PC-9 (cell line): ENCODE measurements at regions of chr6 and their contacts with region 1.

Region 1: DNA sequence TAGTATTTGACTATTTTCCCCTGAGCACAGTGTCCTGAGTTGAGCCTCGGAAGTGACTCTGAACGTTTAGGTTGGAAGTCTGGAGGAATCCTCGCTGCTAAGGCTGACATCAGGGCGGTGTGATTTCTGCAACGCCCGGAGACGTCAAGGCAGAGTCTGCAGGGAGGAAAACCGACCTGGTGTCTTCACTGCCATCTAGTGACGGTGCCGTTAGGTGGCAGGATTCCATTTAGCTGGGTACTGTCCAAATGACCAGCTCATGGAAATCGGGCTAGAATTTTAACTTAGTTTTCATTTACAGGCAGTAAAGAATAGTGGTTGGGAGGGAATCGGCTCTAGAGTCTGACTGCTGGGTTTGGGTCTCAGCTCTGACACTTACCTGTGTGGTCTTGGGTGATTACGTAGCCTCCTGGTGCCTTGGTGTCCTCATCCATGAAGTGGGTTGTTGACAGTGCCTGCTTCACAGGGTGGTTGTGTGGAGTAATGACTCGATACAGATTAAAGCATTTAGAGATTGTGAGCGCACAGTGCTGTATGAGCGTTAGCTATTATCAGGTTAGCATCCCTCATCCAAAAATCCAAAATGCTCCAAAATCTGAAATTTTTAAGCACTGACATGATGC is 35.0 kb downstream of the FOXF2 start:
- DNase-seq: peak in 1 of 2 experiments; percentile 45
- H3K4me3 ChIP-seq: no peak overlapping the region
- H3K27ac ChIP-seq: no peak overlapping the region
- H3K4me1 ChIP-seq: no peaks in the 10 kb centered on the region
- H3K27me3 ChIP-seq: 0 out of 2 replicates have a peak, but pooled peaks cover 8% of the 10 kb centered on the region
- CTCF ChIP-seq: peak; percentile 68

Region 2: DNA sequence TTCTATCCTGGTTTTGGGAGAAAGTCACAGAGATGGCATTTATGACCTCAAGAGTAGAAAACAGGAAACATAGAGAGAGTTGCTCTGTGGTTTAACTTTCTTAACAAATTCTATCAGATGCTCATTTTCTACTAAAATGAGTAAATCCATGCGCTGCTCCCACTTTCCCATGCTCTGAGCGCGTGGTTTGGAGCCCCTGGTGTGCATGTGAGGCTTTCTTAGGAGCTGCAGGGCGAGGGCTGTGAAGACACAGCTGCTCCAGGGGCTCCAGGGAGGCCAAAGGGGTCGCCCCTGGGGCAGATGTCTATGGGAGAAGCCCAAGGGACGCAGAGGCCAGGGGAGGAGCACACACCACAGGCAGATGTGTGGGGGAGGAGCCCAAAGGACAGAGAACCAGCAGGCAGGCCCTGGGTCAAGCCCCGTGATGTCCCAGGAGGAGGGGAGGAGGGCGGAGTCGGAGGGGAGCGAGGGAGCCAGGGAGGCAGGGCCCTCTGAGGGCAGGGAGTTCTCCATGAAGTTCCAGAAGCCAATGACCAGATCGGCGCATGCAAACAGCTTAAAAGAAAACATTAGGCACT is 909.9 kb before region 1 on chr6:
- CTCF ChIA-PET with region 1: no interaction called
- POLR2A ChIA-PET with region 1: no interaction called
- intact Hi-C with region 1: no loop called
- DNase-seq: no peak
- H3K4me3 ChIP-seq: no peak overlapping the region
- H3K27ac ChIP-seq: no peak overlapping the region
- H3K4me1 ChIP-seq: no peaks in the 10 kb centered on the region
- H3K27me3 ChIP-seq: no peaks in the 10 kb centered on the region
- CTCF ChIP-seq: no peak

Region 3: GRCh38 chr6:692855-693722 is 731.3 kb before region 1 on chr6 and contains the start of gene EXOC2:
- CTCF ChIA-PET with region 1: no interaction called
- POLR2A ChIA-PET with region 1: interaction called, 40 read pairs
- intact Hi-C with region 1: no loop called
- DNase-seq: peak; percentile 56 to 81
- H3K4me3 ChIP-seq: peak within 1 kb of the TSS; percentile 80
- H3K27ac ChIP-seq: peak within 1 kb of the TSS; percentile 49; the same call in 1 of the 2 replicates
- H3K4me1 ChIP-seq: peaks cover 6% of the 10 kb centered on the region; the same call in 1 of the 2 replicates
- H3K27me3 ChIP-seq: no peaks in the 10 kb centered on the region
- CTCF ChIP-seq: no peak
- total RNA-seq, gene EXOC2: 21.3 and 28.2 TPM in 2 replicates

Region 4: DNA sequence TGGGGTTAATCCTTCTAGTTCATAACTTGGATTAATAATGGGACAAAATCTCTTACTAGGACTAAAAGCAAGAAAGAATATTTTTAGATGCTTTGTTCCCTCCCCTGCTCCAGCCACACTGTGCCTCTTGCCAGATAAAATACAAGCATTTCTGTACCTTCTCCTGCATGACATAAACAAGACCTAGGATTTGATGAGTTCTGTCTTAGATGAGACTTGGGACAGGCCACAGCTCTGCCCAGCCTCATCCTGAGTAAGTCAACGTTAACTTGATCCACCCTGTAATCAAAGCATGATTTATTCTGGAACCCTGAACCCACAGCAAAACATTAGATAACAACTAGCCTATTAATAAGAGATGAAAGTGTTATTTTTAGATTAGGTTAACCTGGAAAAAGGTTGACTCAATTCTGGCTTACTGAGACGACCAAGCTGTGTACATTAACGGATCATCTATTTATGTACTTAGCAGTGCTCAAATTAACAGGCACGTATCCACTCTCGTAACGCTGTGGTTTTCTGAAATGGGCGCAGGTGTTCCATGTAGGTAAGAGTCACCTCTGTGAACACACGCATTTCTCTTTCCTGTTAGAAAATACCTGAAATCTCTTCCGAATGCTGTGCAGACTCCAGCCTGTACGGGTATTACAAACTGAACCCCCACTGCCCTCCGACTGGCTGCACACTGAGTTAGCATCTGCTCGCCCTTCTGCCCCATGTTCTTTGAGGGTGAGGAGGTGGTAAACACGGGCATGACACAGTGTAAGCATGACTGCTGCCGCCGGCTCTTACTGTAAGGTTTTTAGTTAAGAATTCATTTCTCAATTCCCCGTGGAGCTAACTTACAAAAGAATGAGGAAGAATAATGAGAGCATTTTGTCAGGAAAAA is 244.6 kb before region 1 on chr6:
- CTCF ChIA-PET with region 1: no interaction called
- POLR2A ChIA-PET with region 1: no interaction called
- intact Hi-C with region 1: no loop called
- DNase-seq: no peak
- H3K4me3 ChIP-seq: no peak overlapping the region
- H3K27ac ChIP-seq: no peak overlapping the region
- H3K4me1 ChIP-seq: 0 out of 2 replicates have a peak, but pooled peaks cover 4% of the 10 kb centered on the region
- H3K27me3 ChIP-seq: no peaks in the 10 kb centered on the region
- CTCF ChIP-seq: no peak

Region 5: DNA sequence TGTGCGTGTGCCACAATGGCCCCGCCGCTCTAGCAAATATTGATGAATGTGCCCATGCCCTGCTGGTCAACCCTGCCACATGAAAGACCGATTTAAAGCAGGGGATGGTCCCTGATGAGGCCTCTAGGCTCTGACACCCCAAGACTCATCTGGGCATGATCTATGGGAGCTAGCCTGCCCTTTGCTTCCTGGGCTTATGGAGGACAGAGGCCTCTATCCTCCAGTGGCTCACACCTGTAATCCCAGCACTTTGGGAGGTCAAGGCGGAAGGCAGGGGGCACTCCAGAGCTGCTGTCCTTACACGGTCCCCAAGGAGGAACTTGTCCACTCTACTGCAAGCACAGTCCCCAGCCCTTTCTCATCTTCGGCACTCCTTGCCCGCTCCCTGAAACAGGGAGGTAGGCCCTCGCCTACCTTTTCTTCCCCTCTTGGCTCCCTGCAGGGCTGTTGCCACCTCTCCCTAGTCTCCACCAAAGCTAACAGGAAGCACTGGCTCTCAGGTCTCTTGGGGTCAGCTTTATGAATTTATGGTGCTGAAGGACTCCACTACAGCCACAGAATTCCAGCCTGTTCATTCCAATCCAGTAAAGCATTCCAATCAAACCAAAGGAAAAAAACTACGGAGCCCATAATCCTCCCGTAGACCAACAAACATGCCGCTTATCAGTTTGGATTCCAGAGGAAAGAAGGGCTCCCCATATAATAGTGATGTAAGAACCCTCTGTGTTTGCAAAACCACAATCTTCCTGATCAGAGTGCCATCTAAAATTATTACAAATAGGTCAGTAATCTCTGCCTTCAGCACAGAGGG is 161.2 kb before region 1 on chr6:
- CTCF ChIA-PET with region 1: no interaction called
- POLR2A ChIA-PET with region 1: no interaction called
- intact Hi-C with region 1: no loop called
- DNase-seq: peak in 1 of 2 experiments; percentile 64
- H3K4me3 ChIP-seq: no peak overlapping the region
- H3K27ac ChIP-seq: peak overlapping the region; percentile 72
- H3K4me1 ChIP-seq: peaks cover 38% of the 10 kb centered on the region
- H3K27me3 ChIP-seq: no peaks in the 10 kb centered on the region
- CTCF ChIP-seq: 0 out of 2 replicates have a peak, but pooled peaks have one; percentile 22

Region 6: DNA sequence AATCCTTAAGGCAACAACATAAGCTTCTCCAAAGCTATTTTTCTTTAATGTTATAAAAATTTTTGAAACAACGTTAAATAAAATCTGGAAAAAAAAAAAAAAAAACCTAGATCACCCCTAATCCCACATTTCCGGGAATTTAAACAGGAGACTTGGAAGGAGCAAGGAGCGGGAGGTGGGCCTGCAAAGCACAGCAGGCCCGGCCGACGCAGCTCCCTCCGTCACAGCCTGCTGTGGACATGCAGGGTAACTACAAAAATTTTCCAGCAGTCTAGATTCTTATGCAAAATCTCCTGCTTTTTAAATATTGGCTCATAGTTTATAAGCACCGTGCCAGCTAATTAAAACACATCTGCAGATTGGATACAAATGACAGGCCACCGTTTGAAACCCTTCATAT is 11.5 kb before region 1 on chr6:
- CTCF ChIA-PET with region 1: no interaction called
- POLR2A ChIA-PET with region 1: interaction called, 29 read pairs
- intact Hi-C with region 1: no loop called
- DNase-seq: no peak
- H3K4me3 ChIP-seq: no peak overlapping the region
- H3K27ac ChIP-seq: no peak overlapping the region
- H3K4me1 ChIP-seq: no peaks in the 10 kb centered on the region
- H3K27me3 ChIP-seq: no peaks in the 10 kb centered on the region
- CTCF ChIP-seq: no peak